Activated CD4-positive, alpha-beta T cell treated with anti-CD3 and anti-CD28 coated beads for 36 hours (primary cell): ENCODE measurements at regions of chr4 and their contacts with region 1.

Region 1: GRCh38 chr4:7939377-7940108 is at the start of gene AFAP1:
- DNase-seq: peak; percentile 92
- ATAC-seq: peak; percentile 97
- H3K4me3 Mint-ChIP-seq: peak within 1 kb of the TSS; percentile 80
- H3K27ac Mint-ChIP-seq: no peak within 1 kb of the TSS
- H3K4me1 Mint-ChIP-seq: peaks cover 27% of the 10 kb centered on the region
- H3K27me3 Mint-ChIP-seq: peaks cover 3% of the 10 kb centered on the region
- total RNA-seq, gene AFAP1: 27.1 to 27.2 TPM

Region 2: DNA sequence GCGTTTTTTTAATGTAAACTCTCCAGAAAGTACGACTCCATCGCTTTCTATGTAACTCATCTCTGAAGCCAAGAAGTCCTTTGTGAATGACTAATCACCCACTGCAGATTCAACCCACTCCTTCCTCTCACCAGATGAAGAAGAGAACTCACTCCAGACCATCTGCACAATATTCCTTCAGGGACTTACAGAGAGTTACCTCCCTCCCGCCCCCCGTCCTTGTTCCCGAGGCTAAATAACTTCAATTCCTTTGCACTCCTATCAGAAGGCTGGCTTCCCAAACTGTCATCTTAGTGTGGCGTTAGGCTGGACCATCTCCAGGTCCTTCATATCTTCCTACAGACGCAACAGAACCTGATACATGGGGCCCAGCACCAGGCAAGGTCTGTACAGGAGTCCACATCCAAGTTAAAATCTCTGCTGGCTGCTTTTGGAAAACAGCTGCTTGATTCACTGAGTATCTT is 82.3 kb before region 1 on chr4:
- CTCF ChIA-PET with region 1: no interaction called
- POLR2A ChIA-PET with region 1: interaction called, 4 read pairs
- intact Hi-C with region 1: loop called (anchors 1 to 5 kb)
- DNase-seq: no peak
- ATAC-seq: peak; percentile 69
- H3K4me3 Mint-ChIP-seq: peak overlapping the region; percentile 15
- H3K27ac Mint-ChIP-seq: peak overlapping the region; percentile 93
- H3K4me1 Mint-ChIP-seq: peaks cover 69% of the 10 kb centered on the region
- H3K27me3 Mint-ChIP-seq: no peaks in the 10 kb centered on the region

Region 3: DNA sequence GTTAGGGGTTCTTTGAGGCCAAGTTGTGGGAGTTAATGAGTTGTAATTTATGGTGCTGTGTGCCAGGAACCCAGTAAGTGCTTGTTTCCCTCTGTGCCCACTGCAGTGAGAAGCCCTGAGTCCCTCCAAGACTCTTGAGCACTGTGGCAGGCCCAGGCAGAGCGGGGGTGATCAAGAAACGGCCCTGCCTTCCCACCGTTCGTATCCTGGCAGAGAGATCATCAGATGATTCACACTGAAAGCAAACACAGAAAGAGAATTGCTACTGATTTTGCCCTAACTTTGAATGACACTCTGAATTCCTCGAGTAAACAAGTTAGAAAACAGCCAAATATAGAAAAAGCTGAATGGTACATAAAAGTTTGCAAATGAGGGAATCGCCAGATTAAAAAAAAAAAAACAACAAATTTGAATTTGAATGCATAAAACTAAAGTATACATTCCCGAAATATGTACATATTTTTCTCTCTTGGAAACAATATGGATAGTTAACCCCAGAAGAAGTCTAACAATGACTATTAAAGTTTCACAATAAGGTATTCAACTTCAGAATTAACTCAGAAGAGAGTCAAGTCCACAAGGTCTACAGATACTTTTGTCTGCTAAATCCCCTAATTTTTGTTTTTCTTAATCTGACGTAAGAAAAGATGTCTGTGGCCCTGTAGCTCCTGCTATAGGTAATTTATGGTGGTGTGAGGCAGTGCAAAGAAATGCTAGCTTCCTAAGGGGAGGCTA is 71.7 kb before region 1 on chr4:
- CTCF ChIA-PET with region 1: no interaction called
- POLR2A ChIA-PET with region 1: no interaction called
- intact Hi-C with region 1: loop called in 1 of 2 experiments (anchors 2 kb)
- DNase-seq: peak; percentile 51
- ATAC-seq: peak; percentile 53
- H3K4me3 Mint-ChIP-seq: no peak overlapping the region
- H3K27ac Mint-ChIP-seq: peak overlapping the region; percentile 74
- H3K4me1 Mint-ChIP-seq: peaks cover 30% of the 10 kb centered on the region
- H3K27me3 Mint-ChIP-seq: no peaks in the 10 kb centered on the region

Region 4: DNA sequence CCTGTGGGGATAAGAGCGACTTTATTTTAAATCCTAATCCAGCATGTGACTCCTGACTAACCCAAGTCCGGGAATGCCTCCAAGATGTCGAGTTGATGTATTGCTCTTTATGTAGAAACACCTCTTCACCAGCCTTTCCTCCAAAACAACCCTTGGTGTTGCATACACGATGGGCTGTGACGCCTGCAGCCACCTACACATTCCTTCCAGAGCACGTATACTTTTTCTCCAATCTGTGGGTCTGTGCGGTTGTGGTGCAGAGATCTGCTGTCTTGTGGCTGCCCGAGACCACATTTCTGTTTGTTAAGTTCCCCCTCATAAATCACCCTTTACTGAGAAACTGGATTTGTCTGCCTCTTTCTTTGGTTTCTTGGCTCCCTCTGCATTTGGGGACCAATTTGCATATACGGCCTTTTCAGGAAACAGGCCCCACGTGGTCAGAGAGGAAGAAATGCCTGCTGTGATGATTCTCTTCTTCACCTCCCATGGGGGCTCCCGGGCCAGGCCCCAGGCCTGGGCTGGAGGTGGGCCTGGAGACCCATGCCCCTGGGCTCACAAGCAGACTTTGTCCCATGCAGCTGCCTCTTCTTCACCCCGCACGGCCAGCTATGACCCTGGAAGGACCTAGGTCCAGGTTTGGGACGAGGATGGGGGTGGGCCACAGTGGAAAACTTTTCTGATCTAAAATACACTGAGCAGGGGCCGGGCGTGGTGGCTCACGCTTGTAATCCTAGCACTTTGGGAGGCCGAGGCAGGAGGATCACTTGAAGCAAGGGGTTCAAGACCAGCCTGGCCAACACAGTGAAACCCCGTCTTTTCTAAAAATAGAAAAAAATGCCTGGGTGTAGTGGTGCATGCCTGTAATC is 21.5 kb after region 1 on chr4:
- CTCF ChIA-PET with region 1: interaction called, 6 read pairs
- POLR2A ChIA-PET with region 1: interaction called, 4 read pairs
- intact Hi-C with region 1: loop called (anchors 1 to 2 kb)
- DNase-seq: peak; percentile 91
- ATAC-seq: peak; percentile 73
- H3K4me3 Mint-ChIP-seq: peak overlapping the region; percentile 51
- H3K27ac Mint-ChIP-seq: peak overlapping the region; percentile 91
- H3K4me1 Mint-ChIP-seq: peaks cover 62% of the 10 kb centered on the region
- H3K27me3 Mint-ChIP-seq: peaks cover 5% of the 10 kb centered on the region

Region 5: DNA sequence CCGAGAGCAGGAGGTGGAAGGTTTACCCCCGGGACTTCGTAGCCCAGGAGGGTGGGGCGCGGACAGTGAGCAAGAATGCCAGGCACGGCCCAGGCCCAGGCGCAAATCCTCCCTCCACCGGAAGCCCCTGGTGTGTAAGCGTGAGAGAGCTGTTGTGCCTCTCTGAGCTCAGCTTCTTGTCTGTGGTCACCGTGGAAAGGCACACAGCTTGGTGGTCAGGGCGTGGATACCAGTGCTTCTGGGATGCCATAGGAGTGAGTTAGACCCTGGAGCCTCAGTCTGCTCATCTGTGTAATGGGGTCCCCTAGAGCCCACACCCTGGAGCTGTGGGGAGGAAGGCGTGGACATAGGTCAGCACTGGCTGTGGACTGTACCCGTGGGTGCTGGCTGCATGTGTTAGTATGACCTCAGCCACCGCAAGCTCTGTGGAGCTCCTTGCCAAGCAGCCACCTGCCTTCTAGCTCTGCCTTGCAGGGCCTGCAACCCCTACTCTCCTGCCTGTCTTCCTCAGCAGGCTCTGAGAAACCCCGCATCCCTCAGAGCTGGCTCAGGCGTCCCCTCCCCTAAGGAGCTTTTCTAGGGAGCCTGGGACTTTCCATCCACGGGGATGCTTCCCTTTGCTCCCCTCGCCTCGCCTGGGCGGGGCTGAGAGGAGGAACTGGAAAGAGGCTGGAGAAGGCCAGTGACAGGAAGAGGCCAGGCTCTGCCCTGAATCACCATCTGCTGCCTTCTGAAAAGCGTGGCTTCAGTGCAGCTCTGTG is 28.1 kb after region 1 on chr4:
- CTCF ChIA-PET with region 1: interaction called, 11 read pairs
- POLR2A ChIA-PET with region 1: interaction called, 6 read pairs
- intact Hi-C with region 1: loop called in 1 of 2 experiments (anchors 2 kb)
- DNase-seq: peak; percentile 36
- ATAC-seq: no peak
- H3K4me3 Mint-ChIP-seq: no peak overlapping the region
- H3K27ac Mint-ChIP-seq: peak overlapping the region; percentile 22
- H3K4me1 Mint-ChIP-seq: peaks cover 71% of the 10 kb centered on the region
- H3K27me3 Mint-ChIP-seq: peaks cover under 1% of the 10 kb centered on the region

Region 6: GRCh38 chr4:7987148-7987989 is 47.8 kb after region 1 on chr4:
- CTCF ChIA-PET with region 1: interaction called, 7 read pairs
- POLR2A ChIA-PET with region 1: no interaction called
- intact Hi-C with region 1: loop called in 1 of 2 experiments (anchors 1 kb)
- DNase-seq: peak; percentile 88
- ATAC-seq: peak; percentile 89
- H3K4me3 Mint-ChIP-seq: no peak overlapping the region
- H3K27ac Mint-ChIP-seq: no peak overlapping the region
- H3K4me1 Mint-ChIP-seq: peaks cover 3% of the 10 kb centered on the region
- H3K27me3 Mint-ChIP-seq: no peaks in the 10 kb centered on the region